ENCODE measurements at regions of chr9 and their contacts with region 1.

Region 1: DNA sequence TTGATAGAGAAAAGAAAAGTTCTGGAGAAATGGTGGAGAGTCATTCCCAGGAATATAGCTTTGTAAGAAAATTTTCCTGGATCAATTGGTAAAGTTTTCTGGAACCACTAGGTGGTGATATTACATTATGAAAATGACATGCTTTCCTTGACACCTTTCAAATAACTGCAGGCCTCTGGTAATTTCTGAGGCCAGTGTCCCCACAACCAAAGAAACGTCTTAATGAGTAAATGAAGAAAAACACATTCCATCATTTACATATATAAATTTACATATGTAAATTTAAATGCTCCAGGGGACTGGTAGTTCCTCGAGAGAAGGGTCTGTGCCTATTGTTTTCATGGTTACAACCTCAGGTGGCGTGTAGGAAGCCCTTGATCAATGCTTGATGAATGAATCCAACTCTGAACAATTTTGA is 17.2 kb upstream of the RGS3 start:
- DNase-seq: peak; percentile 24
- H3K4me3 ChIP-seq: no peak overlapping the region
- H3K27ac ChIP-seq: no peak overlapping the region
- H3K4me1 ChIP-seq: no peaks in the 10 kb centered on the region
- H3K27me3 ChIP-seq: no peaks in the 10 kb centered on the region
- CTCF ChIP-seq: peak; percentile 34 to 55

Region 2: GRCh38 chr9:113309204-113309813 is 137.0 kb before region 1 on chr9:
- CTCF ChIA-PET with region 1: no interaction called
- dilution Hi-C with region 1: no loop called
- in situ Hi-C with region 1: no loop called
- intact Hi-C with region 1: loop called (anchors 5 kb)
- DNase-seq: peak; percentile 9
- H3K4me3 ChIP-seq: no peak overlapping the region
- H3K27ac ChIP-seq: no peak overlapping the region
- H3K4me1 ChIP-seq: no peaks in the 10 kb centered on the region
- H3K27me3 ChIP-seq: no peaks in the 10 kb centered on the region
- CTCF ChIP-seq: peak; percentile 75 to 78

Region 3: GRCh38 chr9:113410207-113410864 is 36.0 kb before region 1 on chr9 and contains the starts of genes C9orf43 and POLE3:
- CTCF ChIA-PET with region 1: no interaction called
- dilution Hi-C with region 1: no loop called
- in situ Hi-C with region 1: no loop called
- intact Hi-C with region 1: no loop called
- DNase-seq: peak; percentile 96
- H3K4me3 ChIP-seq: peak within 1 kb of the TSS; percentile 89 to 98 (median 97)
- H3K27ac ChIP-seq: peak within 1 kb of the TSS; percentile 96
- H3K4me1 ChIP-seq: peaks cover 13% of the 10 kb centered on the region
- H3K27me3 ChIP-seq: no peaks in the 10 kb centered on the region
- CTCF ChIP-seq: no peak
- total RNA-seq, gene C9orf43: 0.56 to 0.83 TPM
- total RNA-seq, gene POLE3: 42.8 to 50.2 TPM